ENCODE measurements at regions of chr11 and their contacts with region 1.

Region 1: DNA sequence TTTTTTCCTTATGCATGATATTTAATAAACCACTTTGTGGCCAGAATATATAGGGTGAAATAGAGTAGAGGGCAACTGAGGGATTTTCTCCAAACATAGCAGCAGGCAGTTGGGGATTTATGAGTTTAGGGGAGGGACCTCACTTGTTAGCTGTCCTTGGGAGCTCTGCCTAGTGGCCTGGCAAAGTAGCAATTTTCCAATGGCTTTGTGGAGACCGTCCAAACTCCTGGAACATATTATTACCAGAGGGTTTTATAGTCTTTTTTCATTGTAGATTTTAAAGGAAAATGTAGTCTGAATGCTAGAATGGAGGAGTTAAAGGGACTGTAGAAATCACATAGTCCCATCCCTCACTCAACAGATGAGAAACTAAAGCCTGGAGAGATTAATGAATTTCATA is 32.3 kb downstream of the AMOTL1 start:
- DNase-seq: no peak
- ATAC-seq: peak; percentile 73

Region 2: GRCh38 chr11:94834911-94835593 is 34.6 kb after region 1 on chr11:
- intact Hi-C with region 1: loop called (anchors 5 kb)
- DNase-seq: no peak
- ATAC-seq: no peak